Colonic mucosa (tissue), 4 donors: ENCODE measurements at regions of chr15 and their contacts with region 1.

Region 1: DNA sequence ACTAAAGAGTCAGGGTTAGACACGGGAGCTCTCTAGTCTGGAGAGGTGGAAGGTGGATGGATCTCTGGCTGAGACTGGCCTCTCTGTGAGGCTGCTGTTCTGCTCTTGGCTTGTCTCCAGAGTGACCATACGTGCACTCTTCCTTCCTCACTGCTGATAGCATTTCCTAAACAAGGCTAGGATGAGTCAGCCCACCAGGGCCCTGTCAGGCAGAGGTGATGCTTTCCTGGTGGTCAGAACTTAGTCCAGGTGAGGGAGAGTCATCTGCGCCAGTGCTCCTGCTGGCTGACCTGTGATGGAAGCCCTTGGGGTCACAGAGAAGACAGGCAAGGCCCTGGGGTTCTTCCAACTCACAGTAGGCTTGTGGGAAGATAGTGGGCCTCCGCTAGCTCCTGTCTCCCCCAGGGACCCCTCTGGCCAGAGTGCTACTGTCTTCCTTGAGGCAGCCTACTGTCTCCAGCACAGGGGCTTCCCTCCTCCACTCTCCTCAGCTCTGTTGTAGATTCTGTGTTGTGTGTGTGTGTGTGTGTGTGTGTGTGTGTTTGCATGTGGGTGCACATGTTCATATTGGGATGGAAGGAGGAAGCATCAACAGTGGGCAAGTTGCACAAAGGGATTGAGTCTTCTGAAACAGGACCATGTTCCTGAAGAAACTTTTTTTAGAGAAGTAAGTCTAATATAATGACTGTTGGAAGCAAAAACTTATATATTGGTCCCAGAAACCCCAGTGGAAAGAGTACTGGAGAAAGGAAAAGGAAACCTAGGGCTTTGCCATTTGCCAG is 16.5 kb downstream of the ALPK3 start:
- DNase-seq: no peak
- H3K4me3 ChIP-seq: no peak overlapping the region
- H3K27ac ChIP-seq: no peak overlapping the region
- H3K4me1 ChIP-seq: no peaks in the 10 kb centered on the region
- H3K27me3 ChIP-seq: no peaks in the 10 kb centered on the region
- CTCF ChIP-seq: no peak

Region 2: GRCh38 chr15:84702961-84703482 is 130.6 kb before region 1 on chr15:
- intact Hi-C with region 1: no loop called
- DNase-seq: peak; percentile 29
- H3K4me3 ChIP-seq: no peak overlapping the region
- H3K27ac ChIP-seq: no peak overlapping the region
- H3K4me1 ChIP-seq: no peaks in the 10 kb centered on the region
- H3K27me3 ChIP-seq: no peaks in the 10 kb centered on the region
- CTCF ChIP-seq: no peak

Region 3: GRCh38 chr15:84716036-84716799 is 117.4 kb before region 1 on chr15 and contains the start of gene SEC11A:
- intact Hi-C with region 1: no loop called
- DNase-seq: peak; percentile 98
- H3K4me3 ChIP-seq: peak within 1 kb of the TSS; percentile 81
- H3K27ac ChIP-seq: peak within 1 kb of the TSS; percentile 96
- H3K4me1 ChIP-seq: peaks cover 11% of the 10 kb centered on the region
- H3K27me3 ChIP-seq: no peaks in the 10 kb centered on the region
- CTCF ChIP-seq: no peak
- total RNA-seq, gene SEC11A: 146 to 154 TPM

Region 4: GRCh38 chr15:84773716-84774115 is 59.9 kb before region 1 on chr15:
- intact Hi-C with region 1: no loop called
- DNase-seq: no peak
- H3K4me3 ChIP-seq: no peak overlapping the region
- H3K27ac ChIP-seq: no peak overlapping the region
- H3K4me1 ChIP-seq: no peaks in the 10 kb centered on the region
- H3K27me3 ChIP-seq: no peaks in the 10 kb centered on the region
- CTCF ChIP-seq: no peak

Region 5: GRCh38 chr15:84818261-84819131 is 15.1 kb before region 1 on chr15:
- intact Hi-C with region 1: no loop called
- DNase-seq: no peak
- H3K4me3 ChIP-seq: no peak overlapping the region
- H3K27ac ChIP-seq: no peak overlapping the region
- H3K4me1 ChIP-seq: no peaks in the 10 kb centered on the region
- H3K27me3 ChIP-seq: no peaks in the 10 kb centered on the region
- CTCF ChIP-seq: no peak

Region 6: GRCh38 chr15:84874981-84875699 is 41.5 kb after region 1 on chr15:
- intact Hi-C with region 1: loop called (anchors 5 kb)
- DNase-seq: no peak
- H3K4me3 ChIP-seq: no peak overlapping the region
- H3K27ac ChIP-seq: no peak overlapping the region
- H3K4me1 ChIP-seq: no peaks in the 10 kb centered on the region
- H3K27me3 ChIP-seq: no peaks in the 10 kb centered on the region
- CTCF ChIP-seq: no peak